ENCODE measurements at regions of chr1 and their contacts with region 1.

Region 1: GRCh38 chr1:161185282-161185682 is 8.0 kb upstream of the B4GALT3 start:
- DNase-seq: peak; percentile 59 to 96 (median 74)
- ATAC-seq: peak; percentile 78
- H3K4me3 ChIP-seq: peak overlapping the region; percentile 41
- H3K4me3 Mint-ChIP-seq: peak overlapping the region; percentile 80
- H3K27ac ChIP-seq: peak overlapping the region; percentile 61 to 77
- H3K27ac Mint-ChIP-seq: peak overlapping the region; percentile 97
- H3K4me1 ChIP-seq: peaks cover 90% of the 10 kb centered on the region
- H3K4me1 Mint-ChIP-seq: peaks cover 74% of the 10 kb centered on the region
- H3K27me3 ChIP-seq: no peaks in the 10 kb centered on the region
- H3K27me3 Mint-ChIP-seq: no peaks in the 10 kb centered on the region
- CTCF ChIP-seq: no peak

Region 2: DNA sequence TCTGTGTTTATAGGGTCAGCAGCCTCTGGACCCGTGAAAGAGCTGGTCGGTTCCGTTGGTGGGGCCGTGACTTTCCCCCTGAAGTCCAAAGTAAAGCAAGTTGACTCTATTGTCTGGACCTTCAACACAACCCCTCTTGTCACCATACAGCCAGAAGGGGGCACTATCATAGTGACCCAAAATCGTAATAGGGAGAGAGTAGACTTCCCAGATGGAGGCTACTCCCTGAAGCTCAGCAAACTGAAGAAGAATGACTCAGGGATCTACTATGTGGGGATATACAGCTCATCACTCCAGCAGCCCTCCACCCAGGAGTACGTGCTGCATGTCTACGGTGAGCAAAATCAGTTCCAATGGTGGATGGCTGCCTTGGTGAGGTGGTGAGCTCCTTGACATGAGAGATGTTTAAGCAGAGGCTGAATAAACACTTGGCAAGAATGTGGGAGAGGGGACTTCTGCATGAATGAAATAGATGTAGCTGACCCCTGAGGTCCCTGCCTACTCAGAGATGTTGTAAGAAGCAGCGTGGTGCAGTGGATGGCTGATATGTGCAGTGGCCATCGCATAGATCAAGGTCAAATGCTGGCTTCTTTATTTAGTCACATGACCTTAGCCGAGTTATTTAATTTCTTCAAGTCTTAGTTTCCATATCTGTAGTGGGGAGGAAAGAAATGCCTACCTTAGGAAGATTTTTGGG is 437.0 kb before region 1 on chr1:
- CTCF ChIA-PET with region 1: no interaction called
- POLR2A ChIA-PET with region 1: no interaction called
- intact Hi-C with region 1: no loop called
- DNase-seq: peak in 1 of 14 experiments; percentile 26
- ATAC-seq: no peak
- H3K4me3 ChIP-seq: no peak overlapping the region
- H3K4me3 Mint-ChIP-seq: no peak overlapping the region
- H3K27ac ChIP-seq: no peak overlapping the region
- H3K27ac Mint-ChIP-seq: no peak overlapping the region
- H3K4me1 ChIP-seq: peaks cover 23% of the 10 kb centered on the region
- H3K4me1 Mint-ChIP-seq: peaks cover 21% of the 10 kb centered on the region
- H3K27me3 ChIP-seq: no peaks in the 10 kb centered on the region
- H3K27me3 Mint-ChIP-seq: no peaks in the 10 kb centered on the region
- CTCF ChIP-seq: no peak

Region 3: DNA sequence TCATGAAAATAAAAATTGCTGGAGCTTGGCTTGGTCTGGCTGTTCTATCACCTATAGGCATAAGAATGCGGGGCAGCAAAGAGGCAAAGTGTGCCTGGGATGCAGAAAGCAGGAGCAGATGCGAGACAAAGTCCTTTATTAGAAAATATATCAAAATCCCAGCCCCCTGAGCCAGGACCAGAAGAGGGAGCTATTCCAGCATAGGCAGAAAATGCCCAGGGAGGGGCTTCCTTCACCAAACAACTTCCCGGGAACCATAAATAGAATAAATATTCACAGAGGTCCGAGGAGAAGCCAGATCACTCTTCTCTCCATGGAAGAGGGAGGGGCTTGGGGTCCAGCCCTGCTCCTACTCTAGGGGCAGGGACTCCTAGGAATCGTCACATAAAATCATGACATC is 14.1 kb before region 1 on chr1:
- CTCF ChIA-PET with region 1: interaction called, 18 read pairs
- POLR2A ChIA-PET with region 1: interaction called, 57 read pairs
- intact Hi-C with region 1: loop called in 1 of 2 experiments (anchors 2 kb)
- DNase-seq: no peak
- ATAC-seq: no peak
- H3K4me3 ChIP-seq: no peak overlapping the region
- H3K4me3 Mint-ChIP-seq: no peak overlapping the region
- H3K27ac ChIP-seq: no peak overlapping the region
- H3K27ac Mint-ChIP-seq: no peak overlapping the region
- H3K4me1 ChIP-seq: peaks cover 51% of the 10 kb centered on the region
- H3K4me1 Mint-ChIP-seq: peaks cover 53% of the 10 kb centered on the region
- H3K27me3 ChIP-seq: no peaks in the 10 kb centered on the region
- H3K27me3 Mint-ChIP-seq: no peaks in the 10 kb centered on the region
- CTCF ChIP-seq: no peak